Naive thymus-derived CD4-positive, alpha-beta T cell (primary cell): ENCODE measurements at regions of chr11 and their contacts with region 1.

Region 1: DNA sequence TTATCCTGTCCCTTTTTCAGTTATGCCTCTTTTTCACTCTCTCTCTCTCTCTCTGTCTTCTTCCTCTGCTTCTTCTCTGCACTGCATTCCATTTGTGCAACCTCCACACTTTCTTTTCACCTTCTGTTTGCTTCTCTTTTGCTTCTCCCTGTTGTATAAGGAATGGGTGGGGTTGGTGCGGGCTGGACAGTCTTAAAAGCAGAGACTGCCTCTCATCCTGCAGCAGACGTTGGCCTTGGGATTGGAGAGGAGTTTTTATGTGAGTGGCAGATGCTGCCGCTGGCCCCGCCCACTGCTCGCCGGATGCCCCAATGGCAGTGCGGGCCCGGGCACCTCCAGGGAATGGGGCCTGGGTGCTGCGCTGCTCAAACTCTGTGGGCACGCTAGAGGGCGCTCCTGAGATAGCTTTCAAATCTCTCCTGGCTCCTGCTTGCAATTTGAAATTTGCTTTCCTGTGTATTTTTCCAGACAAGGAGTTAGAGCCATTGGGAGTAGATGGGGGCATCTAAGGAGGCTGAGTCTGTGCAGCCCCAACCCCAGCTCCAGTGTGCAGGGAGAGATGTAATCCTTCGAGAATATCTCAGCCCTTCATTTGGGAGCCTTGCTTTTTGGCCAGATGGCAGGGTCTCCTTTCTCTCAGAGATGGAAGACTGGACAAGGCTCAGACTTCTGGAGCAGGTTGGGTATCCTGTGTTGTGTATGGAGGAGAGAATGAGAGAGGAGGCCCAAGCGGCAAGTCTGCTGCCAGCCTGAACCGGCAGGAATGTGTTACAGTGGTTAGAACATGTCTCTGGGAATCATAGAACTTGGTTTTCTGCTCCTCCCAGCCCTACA is 81.2 kb downstream of the GRAMD1B start:
- DNase-seq: peak; percentile 19 to 75 (median 50)
- ATAC-seq: peak; percentile 96
- H3K4me3 ChIP-seq: no peak overlapping the region
- H3K4me3 Mint-ChIP-seq: no peak overlapping the region
- H3K27ac ChIP-seq: no peak overlapping the region
- H3K27ac Mint-ChIP-seq: peak overlapping the region in 1 of 9 donors; percentile 58
- H3K4me1 ChIP-seq: peaks cover 0 to 3% of the 10 kb centered on the region in 2 donors
- H3K4me1 Mint-ChIP-seq: peaks cover 4 to 50% (median 6%) of the 10 kb centered on the region in 7 donors
- H3K27me3 ChIP-seq: no peaks in the 10 kb centered on the region
- H3K27me3 Mint-ChIP-seq: peaks cover 0 to 3% (median 0%) of the 10 kb centered on the region in 5 donors

Region 2: GRCh38 chr11:123560006-123560405 is 48.8 kb after region 1 on chr11:
- CTCF ChIA-PET with region 1: no interaction called
- POLR2A ChIA-PET with region 1: no interaction called
- intact Hi-C with region 1: loop called in 1 of 2 experiments (anchors 2 kb)
- DNase-seq: peak in 6 of 9 donors; percentile 31 to 76 (median 57)
- ATAC-seq: peak; percentile 81
- H3K4me3 ChIP-seq: no peak overlapping the region
- H3K4me3 Mint-ChIP-seq: peak overlapping the region; percentile 75 to 95 (median 82)
- H3K27ac ChIP-seq: no peak overlapping the region
- H3K27ac Mint-ChIP-seq: peak overlapping the region in 7 of 9 donors; percentile 19 to 88 (median 79)
- H3K4me1 ChIP-seq: peaks cover 0 to 7% of the 10 kb centered on the region in 2 donors
- H3K4me1 Mint-ChIP-seq: peaks cover 7 to 32% (median 18%) of the 10 kb centered on the region in 7 donors
- H3K27me3 ChIP-seq: no peaks in the 10 kb centered on the region
- H3K27me3 Mint-ChIP-seq: peaks cover 0 to 4% (median 0%) of the 10 kb centered on the region in 5 donors

Region 3: GRCh38 chr11:123580557-123581275 is 69.5 kb after region 1 on chr11:
- CTCF ChIA-PET with region 1: interaction called, 3 read pairs
- POLR2A ChIA-PET with region 1: no interaction called
- intact Hi-C with region 1: loop called (anchors 1 to 2 kb)
- DNase-seq: peak; percentile 43 to 71 (median 56)
- ATAC-seq: peak; percentile 91
- H3K4me3 ChIP-seq: no peak overlapping the region
- H3K4me3 Mint-ChIP-seq: peak overlapping the region in 5 of 10 donors; percentile 9 to 62 (median 25)
- H3K27ac ChIP-seq: no peak overlapping the region
- H3K27ac Mint-ChIP-seq: peak overlapping the region in 2 of 9 donors; percentile 4 to 36
- H3K4me1 ChIP-seq: peaks cover 0 to 4% of the 10 kb centered on the region in 2 donors
- H3K4me1 Mint-ChIP-seq: peaks cover 7 to 30% (median 18%) of the 10 kb centered on the region in 7 donors
- H3K27me3 ChIP-seq: no peaks in the 10 kb centered on the region
- H3K27me3 Mint-ChIP-seq: peaks cover 0 to 4% (median 0%) of the 10 kb centered on the region in 5 donors